ENCODE measurements at regions of chr22 and their contacts with region 1.

Region 1: DNA sequence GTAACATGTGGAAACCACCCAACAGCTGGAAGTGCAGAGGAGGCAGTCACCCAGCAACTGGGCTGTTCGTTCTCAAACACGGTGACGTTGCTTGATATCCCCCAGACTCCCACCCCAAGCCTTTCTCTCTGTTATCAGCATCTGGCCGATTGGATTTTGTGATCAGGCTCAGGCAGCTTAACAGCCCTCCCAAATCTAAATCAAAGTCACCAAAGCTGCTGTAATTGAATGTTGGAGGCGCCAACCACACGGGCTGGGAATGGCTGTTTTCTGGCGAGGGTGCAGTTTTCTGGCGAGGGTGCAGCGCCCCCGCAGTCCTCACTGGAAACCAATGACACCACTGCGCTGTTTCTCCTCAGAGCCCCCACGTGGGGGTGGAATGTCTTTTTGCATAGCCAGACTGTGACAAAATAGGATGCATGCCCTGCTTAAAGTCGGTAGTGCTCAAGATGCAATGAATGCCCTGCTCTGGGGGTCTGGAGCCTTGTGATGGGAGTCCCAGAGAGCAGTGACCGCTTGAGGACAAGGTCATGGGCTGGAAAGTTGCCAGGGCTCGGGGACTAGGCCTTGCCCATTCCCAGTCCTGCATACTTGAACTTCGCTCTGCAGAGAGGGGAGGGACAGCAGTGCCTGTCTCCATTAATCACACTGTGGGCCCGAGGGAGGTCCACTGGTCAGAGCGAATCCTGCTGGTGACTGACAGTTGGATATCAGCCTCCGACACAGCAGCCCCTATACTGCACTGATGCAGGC is 105.3 kb downstream of the MORC2 start:
- DNase-seq: no peak
- H3K27ac ChIP-seq: no peak overlapping the region
- CTCF ChIP-seq: no peak

Region 2: GRCh38 chr22:30843245-30843644 is 20.0 kb before region 1 on chr22:
- CTCF ChIA-PET with region 1: interaction called, 11 read pairs
- POLR2A ChIA-PET with region 1: no interaction called
- DNase-seq: no peak
- H3K27ac ChIP-seq: peak overlapping the region; percentile 91
- CTCF ChIP-seq: no peak

Measured in RWPE1 (cell line).